B cell (primary cell): ENCODE measurements at regions of chr15 and their contacts with region 1.

Region 1: GRCh38 chr15:45634442-45635190 is at the start of gene SQOR:
- DNase-seq: peak; percentile 79
- ATAC-seq: peak; percentile 74
- H3K4me3 ChIP-seq: peak within 1 kb of the TSS; percentile 81 to 91 (median 86)
- H3K4me3 Mint-ChIP-seq: peak within 1 kb of the TSS; percentile 99
- H3K27ac ChIP-seq: peak within 1 kb of the TSS; percentile 69 to 78
- H3K27ac Mint-ChIP-seq: peak within 1 kb of the TSS; percentile 97
- H3K4me1 ChIP-seq: peaks cover 30 to 36% of the 10 kb centered on the region in 2 donors
- H3K4me1 Mint-ChIP-seq: peaks cover 39% of the 10 kb centered on the region
- H3K27me3 ChIP-seq: no peaks in the 10 kb centered on the region
- H3K27me3 Mint-ChIP-seq: no peaks in the 10 kb centered on the region
- CTCF ChIP-seq: no peak
- total RNA-seq, gene SQOR: 24.3 and 25.6 TPM in 2 replicates

Region 2: GRCh38 chr15:45705510-45706473 is 71.2 kb after region 1 on chr15:
- CTCF ChIA-PET with region 1: interaction called, 8 read pairs
- POLR2A ChIA-PET with region 1: no interaction called
- intact Hi-C with region 1: loop called (anchors 2 kb)
- DNase-seq: peak; percentile 82
- ATAC-seq: peak; percentile 89
- H3K4me3 ChIP-seq: peak overlapping the region; percentile 48 to 84 (median 79)
- H3K4me3 Mint-ChIP-seq: peak overlapping the region; percentile 93
- H3K27ac ChIP-seq: peak overlapping the region in 1 of 2 donors; percentile 21
- H3K27ac Mint-ChIP-seq: no peak overlapping the region
- H3K4me1 ChIP-seq: peaks cover 10 to 12% of the 10 kb centered on the region in 2 donors
- H3K4me1 Mint-ChIP-seq: peaks cover 14% of the 10 kb centered on the region
- H3K27me3 ChIP-seq: peaks cover 0 to 17% (median 7%) of the 10 kb centered on the region in 4 experiments
- H3K27me3 Mint-ChIP-seq: peaks cover 8% of the 10 kb centered on the region
- CTCF ChIP-seq: peak; percentile 98